Naive thymus-derived CD4-positive, alpha-beta T cell (primary cell): ENCODE measurements at regions of chr1 and their contacts with region 1.

Region 1: GRCh38 chr1:39098546-39099250 is 72.5 kb downstream of the NDUFS5 start:
- DNase-seq: peak in 8 of 9 donors; percentile 42 to 75 (median 69)
- ATAC-seq: peak; percentile 89
- H3K4me3 ChIP-seq: no peak overlapping the region
- H3K4me3 Mint-ChIP-seq: no peak overlapping the region
- H3K27ac ChIP-seq: no peak overlapping the region
- H3K27ac Mint-ChIP-seq: peak overlapping the region in 5 of 9 donors; percentile 5 to 65 (median 9)
- H3K4me1 ChIP-seq: peaks cover 3 to 10% of the 10 kb centered on the region in 2 donors
- H3K4me1 Mint-ChIP-seq: peaks cover 22 to 24% (median 23%) of the 10 kb centered on the region in 7 donors
- H3K27me3 ChIP-seq: no peaks in the 10 kb centered on the region
- H3K27me3 Mint-ChIP-seq: peaks cover 0 to 3% (median 0%) of the 10 kb centered on the region in 5 donors

Region 2: DNA sequence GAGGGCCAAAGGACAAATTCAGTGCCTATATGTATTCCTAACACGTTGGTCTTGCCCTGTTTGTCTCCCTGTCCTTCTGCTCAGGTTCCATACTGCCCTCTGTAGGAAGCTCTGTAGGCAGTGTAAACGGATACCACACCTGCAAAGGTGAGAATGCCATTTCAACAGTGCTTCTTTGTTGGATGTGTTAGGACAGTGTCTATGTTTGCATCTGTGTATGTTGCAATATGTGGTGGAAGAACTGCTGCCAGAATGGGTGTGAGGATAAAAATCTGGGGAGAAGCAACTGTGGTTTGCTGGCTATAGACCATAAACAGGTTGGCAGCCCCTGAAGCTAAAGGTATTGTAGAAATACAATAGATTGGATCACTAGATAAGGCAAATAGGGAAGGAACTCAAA is 279.7 kb after region 1 on chr1:
- CTCF ChIA-PET with region 1: no interaction called
- POLR2A ChIA-PET with region 1: no interaction called
- intact Hi-C with region 1: loop called in 1 of 2 experiments (anchors 1 kb)
- DNase-seq: peak in 1 of 9 donors; percentile 8
- ATAC-seq: peak; percentile 36
- H3K4me3 ChIP-seq: no peak overlapping the region
- H3K4me3 Mint-ChIP-seq: no peak overlapping the region
- H3K27ac ChIP-seq: no peak overlapping the region
- H3K27ac Mint-ChIP-seq: peak overlapping the region in 5 of 9 donors; percentile 21 to 81 (median 72)
- H3K4me1 ChIP-seq: no peaks in the 10 kb centered on the region
- H3K4me1 Mint-ChIP-seq: peaks cover 0 to 4% (median 0%) of the 10 kb centered on the region in 7 donors
- H3K27me3 ChIP-seq: no peaks in the 10 kb centered on the region
- H3K27me3 Mint-ChIP-seq: no peaks in the 10 kb centered on the region

Region 3: DNA sequence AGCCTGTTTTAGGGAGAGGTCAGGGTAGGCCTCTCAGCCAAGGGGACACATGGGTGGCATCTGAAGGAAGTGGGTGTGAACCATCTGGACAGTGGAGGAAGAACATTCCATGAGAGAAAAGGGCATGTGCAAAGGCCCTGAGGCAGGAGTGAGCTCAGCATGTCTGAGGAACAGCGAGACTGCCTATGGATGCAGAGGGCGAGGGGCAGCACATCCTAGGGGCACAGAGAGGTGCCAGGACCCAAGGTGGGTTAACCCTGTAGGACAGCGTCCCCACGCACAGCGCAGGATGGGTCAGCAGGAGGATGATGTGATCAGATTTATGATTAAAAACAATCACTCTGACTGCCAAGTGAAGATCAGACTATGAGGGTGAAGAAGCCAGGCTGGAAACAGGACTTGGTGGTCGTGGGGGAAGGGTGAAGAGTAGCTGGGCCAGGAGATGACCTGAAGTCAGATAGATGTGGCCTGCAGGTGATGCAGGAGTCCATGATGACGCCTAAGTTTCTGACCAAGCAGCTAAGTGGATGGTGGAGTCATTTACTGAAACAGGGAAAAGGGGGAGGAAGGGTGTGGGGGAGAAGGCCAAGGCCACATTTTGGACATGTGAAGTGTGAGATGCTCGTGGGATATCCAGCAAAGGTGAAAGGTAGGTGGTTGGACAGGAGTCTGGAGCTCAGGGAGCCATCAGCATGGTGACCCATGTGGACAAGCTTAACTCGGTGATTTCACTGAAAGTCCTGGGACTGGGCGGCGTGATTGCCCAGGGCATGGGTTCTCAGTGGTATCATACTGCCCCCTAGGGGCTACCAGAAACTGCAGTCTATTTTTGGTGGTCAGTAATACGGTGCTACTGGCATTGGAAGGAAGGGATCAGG is 440.1 kb after region 1 on chr1:
- CTCF ChIA-PET with region 1: interaction called, 27 read pairs
- POLR2A ChIA-PET with region 1: no interaction called
- intact Hi-C with region 1: loop called (anchors 1 to 2 kb)
- DNase-seq: peak in 7 of 9 donors; percentile 14 to 43 (median 39)
- ATAC-seq: peak; percentile 77
- H3K4me3 ChIP-seq: no peak overlapping the region
- H3K4me3 Mint-ChIP-seq: no peak overlapping the region
- H3K27ac ChIP-seq: no peak overlapping the region
- H3K27ac Mint-ChIP-seq: peak overlapping the region in 2 of 9 donors; percentile 26 to 30
- H3K4me1 ChIP-seq: no peaks in the 10 kb centered on the region
- H3K4me1 Mint-ChIP-seq: peaks cover 0 to 10% (median 0%) of the 10 kb centered on the region in 7 donors
- H3K27me3 ChIP-seq: no peaks in the 10 kb centered on the region
- H3K27me3 Mint-ChIP-seq: no peaks in the 10 kb centered on the region

Region 4: GRCh38 chr1:39653546-39654031 is 554.9 kb after region 1 on chr1:
- CTCF ChIA-PET with region 1: no interaction called
- POLR2A ChIA-PET with region 1: no interaction called
- intact Hi-C with region 1: loop called (anchors 2 to 5 kb)
- DNase-seq: peak; percentile 51 to 74 (median 68)
- ATAC-seq: peak; percentile 89
- H3K4me3 ChIP-seq: no peak overlapping the region
- H3K4me3 Mint-ChIP-seq: no peak overlapping the region
- H3K27ac ChIP-seq: no peak overlapping the region
- H3K27ac Mint-ChIP-seq: no peak overlapping the region
- H3K4me1 ChIP-seq: peaks cover 0 to 3% of the 10 kb centered on the region in 2 donors
- H3K4me1 Mint-ChIP-seq: peaks cover 0 to 17% (median 4%) of the 10 kb centered on the region in 7 donors
- H3K27me3 ChIP-seq: no peaks in the 10 kb centered on the region
- H3K27me3 Mint-ChIP-seq: peaks cover 0 to 13% (median 0%) of the 10 kb centered on the region in 5 donors